Lower leg skin (tissue), 4 donors: ENCODE measurements at regions of chr7 and their contacts with region 1.

Region 1: GRCh38 chr7:108920490-108920889 is 350.8 kb downstream of the DNAJB9 start:
- DNase-seq: no peak
- H3K4me3 ChIP-seq: no peak overlapping the region
- CTCF ChIP-seq: no peak
- POLR2A ChIP-seq: no peak

Region 2: DNA sequence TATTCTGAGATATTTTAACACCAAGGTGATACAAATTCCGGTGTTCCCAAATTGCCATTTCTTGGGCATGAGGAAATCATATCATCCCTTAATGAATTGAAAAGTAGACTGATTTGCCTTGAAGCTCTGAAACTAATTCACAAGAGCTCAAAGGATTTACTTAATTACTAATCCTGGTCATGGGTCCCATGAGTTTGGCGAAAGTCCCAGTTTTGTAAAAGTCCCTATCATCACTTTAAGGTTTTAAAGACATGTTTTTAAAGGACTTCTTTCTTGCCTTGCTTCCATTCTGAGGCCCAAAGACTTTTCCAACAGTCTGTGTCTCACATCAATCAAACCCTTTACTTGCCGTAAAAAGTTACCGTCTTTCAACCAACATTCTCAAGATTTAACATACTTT is 27.0 kb after region 1 on chr7:
- intact Hi-C with region 1: loop called (anchors 1 kb)
- DNase-seq: no peak
- H3K4me3 ChIP-seq: no peak overlapping the region
- CTCF ChIP-seq: no peak
- POLR2A ChIP-seq: no peak